ENCODE measurements at regions of chr12 and their contacts with region 1.

Region 1: GRCh38 chr12:828726-829395 is 76.5 kb downstream of the WNK1 start:
- DNase-seq: no peak
- ATAC-seq: no peak
- H3K4me3 ChIP-seq: no peak overlapping the region
- H3K27ac ChIP-seq: no peak overlapping the region
- H3K4me1 ChIP-seq: no peaks in the 10 kb centered on the region
- H3K27me3 ChIP-seq: no peaks in the 10 kb centered on the region
- CTCF ChIP-seq: no peak
- POLR2A ChIP-seq: no peak
- RAD21 ChIP-seq: no peak

Region 2: GRCh38 chr12:873954-874353 is 45.1 kb after region 1 on chr12:
- CTCF ChIA-PET with region 1: no interaction called
- POLR2A ChIA-PET with region 1: no interaction called
- dilution Hi-C with region 1: no loop called
- in situ Hi-C with region 1: no loop called
- intact Hi-C with region 1: loop called (anchors 5 kb)
- DNase-seq: no peak
- ATAC-seq: no peak
- H3K4me3 ChIP-seq: no peak overlapping the region
- H3K27ac ChIP-seq: no peak overlapping the region
- H3K4me1 ChIP-seq: no peaks in the 10 kb centered on the region
- H3K27me3 ChIP-seq: no peaks in the 10 kb centered on the region
- CTCF ChIP-seq: no peak
- POLR2A ChIP-seq: no peak
- RAD21 ChIP-seq: no peak